ENCODE measurements at regions of chr6 and their contacts with region 1.

Region 1: DNA sequence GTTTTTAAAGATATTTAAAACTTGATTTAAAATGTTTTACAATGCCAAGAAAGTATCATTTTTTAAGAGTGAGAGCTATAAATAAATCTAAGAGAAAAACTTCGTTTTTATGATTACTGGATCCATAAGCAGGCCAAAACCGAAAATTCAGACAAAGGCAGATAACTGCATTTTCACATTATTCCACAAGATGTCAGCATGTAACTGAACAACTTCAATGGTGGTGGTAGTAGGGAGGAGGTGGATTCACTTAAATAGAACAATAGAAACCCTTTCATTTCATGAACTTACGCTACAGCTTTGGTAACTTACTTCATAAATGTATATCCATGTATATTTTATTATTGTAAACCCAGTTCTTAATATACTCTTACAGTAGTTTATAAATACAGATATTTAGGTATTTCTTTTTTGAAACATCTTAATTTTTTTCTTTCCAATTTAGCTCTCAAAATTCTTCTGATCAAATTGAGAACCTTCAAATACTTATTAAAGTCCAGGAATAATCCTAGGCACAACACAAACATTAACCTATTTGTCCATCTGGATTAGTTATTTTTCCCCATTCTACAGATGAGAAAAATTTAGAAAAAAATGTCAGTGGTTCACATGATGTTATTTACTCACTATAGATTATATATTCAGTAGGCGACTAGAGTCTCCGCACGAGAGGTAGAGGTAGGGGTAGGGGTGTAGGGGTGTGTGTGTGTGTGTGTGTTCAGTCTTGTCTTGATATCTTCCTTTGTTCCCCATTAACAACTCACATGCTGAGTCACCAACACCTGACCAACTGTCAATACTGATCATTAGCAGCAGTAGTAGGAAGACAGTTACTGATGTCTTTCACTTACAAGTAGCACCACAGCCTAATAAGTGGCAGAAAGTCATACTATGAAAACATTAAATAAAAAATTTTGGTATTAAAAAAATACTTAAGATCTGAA is 111.5 kb downstream of the ARHGAP18 start:
- DNase-seq: no peak
- H3K4me3 ChIP-seq: peak overlapping the region in 14 of 59 donors; percentile 2 to 42 (median 18)
- H3K27ac ChIP-seq: no peak overlapping the region
- H3K27me3 ChIP-seq: no peaks in the 10 kb centered on the region
- CTCF ChIP-seq: peak; percentile 71 to 99 (median 89)

Region 2: DNA sequence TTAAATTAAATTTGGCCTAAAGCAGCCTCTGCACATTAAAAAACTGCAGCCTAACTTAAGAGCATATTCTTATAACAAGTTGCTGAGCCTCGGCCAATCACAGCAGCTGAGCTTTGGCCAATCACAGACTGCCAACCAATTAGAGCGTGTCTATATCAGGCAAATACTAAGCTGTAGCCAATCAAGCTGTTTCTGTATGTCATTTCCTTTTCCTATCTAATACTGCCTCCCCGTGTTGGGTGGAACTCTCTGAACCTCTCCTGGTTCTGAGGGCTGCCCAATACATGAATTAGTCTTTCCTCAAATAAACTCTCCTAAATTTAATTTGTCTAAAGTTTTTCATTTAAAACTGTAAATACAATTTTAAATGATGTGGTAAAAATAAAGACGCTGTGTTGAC is 266.5 kb after region 1 on chr6:
- intact Hi-C with region 1: loop called in 1 of 2 experiments (anchors 5 kb)
- DNase-seq: no peak
- H3K4me3 ChIP-seq: no peak overlapping the region
- H3K27ac ChIP-seq: peak overlapping the region in 33 of 59 donors; percentile 60 to 97 (median 90)
- H3K27me3 ChIP-seq: no peaks in the 10 kb centered on the region
- CTCF ChIP-seq: peak in 2 of 56 donors; percentile 13 to 18

Region 3: GRCh38 chr6:129936329-129937165 is 338.0 kb after region 1 on chr6:
- intact Hi-C with region 1: loop called (anchors 5 to 10 kb)
- DNase-seq: peak in 3 of 10 donors; percentile 17 to 52 (median 39)
- H3K4me3 ChIP-seq: peak overlapping the region in 14 of 59 donors; percentile 3 to 51 (median 22)
- H3K27ac ChIP-seq: no peak overlapping the region
- H3K27me3 ChIP-seq: peaks cover 0 to under 1% (median 0%) of the 10 kb centered on the region in 45 donors
- CTCF ChIP-seq: peak; percentile 32 to 81 (median 67)